ENCODE measurements at regions of chr2 and their contacts with region 1.

Region 1: DNA sequence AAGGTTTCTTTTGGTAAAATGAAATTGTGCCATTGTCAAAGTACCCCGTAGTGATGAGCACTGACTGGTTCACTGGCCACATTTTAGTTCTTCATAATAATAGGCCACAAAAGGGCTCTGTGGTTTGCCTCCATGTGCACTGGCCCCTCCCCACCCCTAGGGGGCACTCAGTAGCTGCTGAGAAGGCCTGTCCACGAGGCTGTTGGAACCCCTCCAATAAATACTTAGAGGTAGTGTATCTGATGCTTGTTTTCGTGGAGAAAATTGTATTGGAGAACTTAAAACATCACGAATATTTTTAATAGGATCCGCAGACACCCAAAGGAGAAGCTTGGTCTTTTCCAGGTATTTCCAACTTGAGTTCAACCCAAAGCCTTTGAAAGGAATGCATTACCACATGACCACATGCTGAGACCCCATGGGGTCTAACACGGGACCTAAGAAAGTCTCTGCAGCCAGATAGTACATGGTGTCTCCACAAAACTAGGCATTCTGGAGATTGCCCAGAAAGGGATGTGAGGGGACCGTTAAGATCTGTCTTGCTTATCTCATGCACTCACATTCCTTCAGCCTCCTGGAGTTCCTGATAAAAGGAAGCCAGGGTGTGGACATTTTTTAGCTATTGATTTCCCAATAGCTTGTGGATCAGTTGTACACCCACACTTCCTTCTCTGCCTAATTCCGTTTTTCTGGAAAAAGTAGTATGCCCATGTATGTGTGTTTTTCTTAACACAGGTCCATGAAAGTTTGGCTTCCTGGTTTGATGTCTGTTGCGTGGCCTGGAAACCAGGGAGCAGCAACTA is 28.5 kb upstream of the NOSTRIN start:
- DNase-seq: peak; percentile 51 to 76
- ATAC-seq: peak; percentile 64 to 90 (median 84)
- H3K4me3 ChIP-seq: no peak overlapping the region
- H3K27ac ChIP-seq: peak overlapping the region in 1 of 10 donors; percentile 3
- H3K4me1 ChIP-seq: peaks cover 0 to 21% (median 6%) of the 10 kb centered on the region in 9 donors
- H3K27me3 ChIP-seq: no peaks in the 10 kb centered on the region
- CTCF ChIP-seq: peak; percentile 82 to 93 (median 89)

Region 2: DNA sequence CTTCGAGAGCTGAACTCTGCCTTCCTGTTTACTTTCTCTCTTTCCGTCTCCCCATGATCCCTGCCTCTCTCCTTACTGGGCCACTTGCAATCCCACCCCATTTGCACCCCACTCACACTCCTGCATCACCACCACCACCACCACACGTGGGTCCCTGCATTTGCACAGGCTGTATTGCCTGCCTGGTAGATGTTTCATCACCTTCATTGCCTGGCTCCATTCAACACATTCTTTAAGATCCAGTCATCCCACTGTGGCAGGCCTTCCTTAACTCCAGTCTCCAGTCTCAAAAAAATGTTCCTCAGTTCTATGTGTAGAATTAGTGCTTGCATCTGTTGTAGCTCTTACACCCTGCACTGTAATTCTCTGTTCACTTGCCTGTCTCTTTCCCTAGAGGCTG is 42.4 kb after region 1 on chr2:
- intact Hi-C with region 1: loop called in 2 of 10 experiments (anchors 5 kb)
- DNase-seq: no peak
- ATAC-seq: no peak
- H3K4me3 ChIP-seq: no peak overlapping the region
- H3K27ac ChIP-seq: no peak overlapping the region
- H3K4me1 ChIP-seq: peaks cover 0 to 60% (median 27%) of the 10 kb centered on the region in 9 donors
- H3K27me3 ChIP-seq: no peaks in the 10 kb centered on the region
- CTCF ChIP-seq: no peak

Region 3: DNA sequence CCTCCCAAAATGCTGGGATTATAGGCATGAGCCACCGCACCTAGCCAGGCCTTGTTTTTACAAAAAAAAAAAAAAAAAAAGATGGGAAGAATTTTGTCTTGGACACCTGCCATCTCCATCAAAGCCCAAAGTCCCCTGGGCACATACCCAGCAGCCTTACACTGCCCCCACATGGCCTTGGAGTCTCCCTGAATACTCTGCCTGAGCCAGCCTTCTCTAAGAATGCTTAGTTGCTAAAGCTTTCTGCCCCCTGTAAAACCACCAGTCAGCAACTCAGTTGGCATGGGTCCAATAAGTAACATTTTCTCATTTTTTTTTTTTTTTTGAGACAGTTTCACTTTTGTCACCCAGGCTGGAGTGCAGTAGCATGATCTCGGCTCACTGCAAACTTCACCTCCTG is 75.7 kb after region 1 on chr2:
- intact Hi-C with region 1: loop called in 7 of 10 experiments (anchors 1 to 10 kb)
- DNase-seq: peak in 1 of 2 donors; percentile 39
- ATAC-seq: peak in 7 of 8 donors; percentile 48 to 82 (median 74)
- H3K4me3 ChIP-seq: no peak overlapping the region
- H3K27ac ChIP-seq: no peak overlapping the region
- H3K4me1 ChIP-seq: peaks cover 0 to 4% (median 0%) of the 10 kb centered on the region in 9 donors
- H3K27me3 ChIP-seq: no peaks in the 10 kb centered on the region
- CTCF ChIP-seq: peak in 7 of 9 donors; percentile 29 to 55 (median 46)

Region 4: GRCh38 chr2:168920504-168921157 is 146.7 kb after region 1 on chr2:
- intact Hi-C with region 1: loop called in 9 of 10 experiments (anchors 1 to 5 kb)
- DNase-seq: no peak
- ATAC-seq: no peak
- H3K4me3 ChIP-seq: no peak overlapping the region
- H3K27ac ChIP-seq: no peak overlapping the region
- H3K4me1 ChIP-seq: no peaks in the 10 kb centered on the region
- H3K27me3 ChIP-seq: peaks cover 0 to 14% (median 4%) of the 10 kb centered on the region in 7 donors
- CTCF ChIP-seq: peak; percentile 49 to 79 (median 70)

Region 5: DNA sequence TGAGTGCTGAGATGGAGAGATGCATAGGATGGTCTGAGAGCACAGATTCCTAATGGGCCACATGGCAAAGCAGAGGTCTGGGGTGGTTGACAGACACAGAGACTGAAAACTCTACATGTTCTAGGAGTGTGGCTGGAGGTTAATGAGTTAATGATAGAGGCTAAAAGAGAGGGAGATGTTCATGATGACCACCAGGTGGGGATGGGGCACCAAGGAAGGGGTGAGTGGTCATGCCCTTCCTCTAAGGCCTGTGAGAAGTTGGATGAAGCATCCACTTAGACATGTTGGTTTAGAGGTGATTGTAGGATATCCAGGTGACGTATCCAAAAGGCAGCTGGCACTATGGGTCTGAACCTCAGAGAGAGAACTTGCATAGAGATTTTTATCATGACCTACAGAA is 486.3 kb after region 1 on chr2:
- intact Hi-C with region 1: no loop called
- DNase-seq: no peak
- ATAC-seq: no peak
- H3K4me3 ChIP-seq: no peak overlapping the region
- H3K27ac ChIP-seq: no peak overlapping the region
- H3K4me1 ChIP-seq: no peaks in the 10 kb centered on the region
- H3K27me3 ChIP-seq: peaks cover 0 to 15% (median 0%) of the 10 kb centered on the region in 7 donors
- CTCF ChIP-seq: no peak

Measured in heart right ventricle (tissue), 16 donors.